SK-N-SH (cell line): ENCODE measurements at regions of chr7 and their contacts with region 1.

Region 1: GRCh38 chr7:1412322-1413261 is 46.7 kb downstream of the MICALL2 start:
- DNase-seq: peak; percentile 100
- H3K4me3 ChIP-seq: no peak overlapping the region; a peak in 2 of 4 replicates
- H3K27ac ChIP-seq: no peak overlapping the region
- H3K4me1 ChIP-seq: peaks cover 0 to 5% of the 10 kb centered on the region in 2 experiments; a peak in 2 of 4 replicates
- H3K27me3 ChIP-seq: peaks cover 76% of the 10 kb centered on the region
- CTCF ChIP-seq: peak; percentile 92
- EP300 ChIP-seq: no peak
- RAD21 ChIP-seq: peak; percentile 80

Region 2: DNA sequence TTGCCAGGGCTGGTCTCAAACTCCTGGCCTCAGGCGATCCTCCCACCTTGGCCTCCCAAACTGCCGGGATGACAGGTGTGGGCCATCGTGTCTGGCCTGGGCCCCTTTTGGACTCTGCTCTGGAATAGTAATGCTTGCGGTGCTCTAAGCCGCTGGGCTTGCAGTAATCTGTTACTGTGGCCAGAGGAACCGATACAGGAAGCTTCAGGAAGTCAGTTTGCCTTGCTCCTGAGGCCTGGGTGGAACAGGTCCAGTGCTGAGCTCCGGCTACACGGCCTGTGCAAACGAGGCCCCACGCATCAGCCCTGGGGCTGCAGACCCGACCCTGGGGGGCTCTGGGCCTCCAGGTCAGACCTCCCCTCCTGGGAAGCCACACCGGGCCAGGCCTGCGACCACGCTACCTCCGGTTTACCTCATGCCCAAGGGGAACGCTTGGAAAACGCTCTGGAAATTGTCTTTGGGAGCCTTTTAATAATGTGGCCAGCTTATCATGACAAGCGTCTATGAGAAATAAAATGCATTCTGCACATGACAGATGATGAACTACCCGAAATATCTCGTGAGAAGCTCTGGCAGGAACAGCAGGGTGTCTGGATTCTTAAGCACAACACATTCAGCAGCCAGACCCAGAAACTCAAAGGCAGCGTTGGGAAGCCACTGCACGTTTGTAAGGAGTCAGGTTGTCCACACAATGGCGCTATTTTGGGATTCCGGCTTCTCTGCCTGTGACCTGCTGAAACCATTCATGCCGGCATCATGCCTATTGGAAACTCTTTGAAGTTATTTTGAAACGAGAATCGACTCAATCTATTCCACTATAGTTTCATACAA is 448.0 kb before region 1 on chr7:
- CTCF ChIA-PET with region 1: no interaction called
- POLR2A ChIA-PET with region 1: no interaction called
- DNase-seq: peak; percentile 89
- H3K4me3 ChIP-seq: no peak overlapping the region
- H3K27ac ChIP-seq: peak overlapping the region in 1 of 2 experiments; percentile 39; a peak in 2 of 4 replicates
- H3K4me1 ChIP-seq: peaks cover 4 to 24% of the 10 kb centered on the region in 2 experiments; a peak in 2 of 4 replicates
- H3K27me3 ChIP-seq: no peaks in the 10 kb centered on the region
- CTCF ChIP-seq: peak; percentile 50
- EP300 ChIP-seq: peak in 1 of 2 experiments; percentile 80; a peak in 2 of 4 replicates
- RAD21 ChIP-seq: peak; percentile 60

Region 3: DNA sequence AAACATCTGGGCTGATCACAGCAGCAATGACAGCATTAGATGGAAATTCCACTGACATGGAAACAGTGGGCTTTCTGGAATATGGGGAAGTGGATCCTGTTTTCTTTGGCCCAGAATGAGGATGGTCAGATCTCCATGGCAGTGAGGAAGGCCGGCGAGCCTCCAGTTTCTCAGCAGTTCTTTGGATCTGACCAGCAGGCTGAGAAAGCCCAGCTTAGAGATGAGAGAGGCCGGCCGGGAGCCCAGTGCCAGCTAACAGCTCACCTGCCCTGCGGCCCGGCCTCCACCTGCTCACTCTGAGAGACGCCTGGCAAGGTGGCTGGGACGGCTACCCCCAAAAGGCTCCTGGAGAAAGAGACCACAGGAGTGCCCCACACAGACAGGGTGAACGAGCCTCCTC is 300.5 kb before region 1 on chr7:
- CTCF ChIA-PET with region 1: no interaction called
- POLR2A ChIA-PET with region 1: no interaction called
- DNase-seq: no peak
- H3K4me3 ChIP-seq: no peak overlapping the region
- H3K27ac ChIP-seq: no peak overlapping the region; a peak in 1 of 4 replicates
- H3K4me1 ChIP-seq: no peaks in the 10 kb centered on the region
- H3K27me3 ChIP-seq: no peaks in the 10 kb centered on the region
- CTCF ChIP-seq: no peak
- EP300 ChIP-seq: no peak
- RAD21 ChIP-seq: no peak

Region 4: GRCh38 chr7:1210321-1210978 is 202.1 kb before region 1 on chr7:
- CTCF ChIA-PET with region 1: interaction called, 12 read pairs
- POLR2A ChIA-PET with region 1: no interaction called
- DNase-seq: peak; percentile 64
- H3K4me3 ChIP-seq: no peak overlapping the region
- H3K27ac ChIP-seq: no peak overlapping the region
- H3K4me1 ChIP-seq: peaks cover 4 to 11% of the 10 kb centered on the region in 2 experiments; a peak in 1 of 4 replicates
- H3K27me3 ChIP-seq: peaks cover 99% of the 10 kb centered on the region
- CTCF ChIP-seq: no peak
- EP300 ChIP-seq: no peak
- RAD21 ChIP-seq: no peak

Region 5: DNA sequence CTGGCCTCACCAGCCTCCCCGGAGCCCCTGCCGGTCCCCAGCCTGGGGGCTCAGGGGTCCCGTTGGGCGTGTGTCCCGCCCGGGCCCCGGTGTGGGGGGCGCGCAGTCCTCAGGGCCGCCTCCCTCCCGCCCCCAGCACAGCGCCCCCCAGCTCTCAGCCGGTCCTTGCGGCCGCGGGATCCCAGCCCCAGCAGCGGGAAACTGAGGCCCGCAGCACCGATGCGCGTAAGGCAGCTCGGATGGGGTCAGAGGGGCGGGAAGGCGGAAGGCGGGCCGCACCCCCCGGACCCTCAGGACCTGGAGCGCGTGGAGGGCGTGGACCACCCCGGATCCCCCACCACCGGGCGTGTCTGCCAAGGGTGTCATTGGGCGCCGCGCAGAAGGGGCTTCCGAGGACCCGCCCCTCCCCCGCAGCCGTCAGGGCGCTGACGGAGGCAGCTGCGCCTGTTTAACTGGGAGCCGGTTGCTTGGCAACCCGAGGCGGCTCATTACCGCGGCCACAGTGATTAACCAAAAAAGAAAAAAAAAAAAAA is 165.0 kb before region 1 on chr7:
- CTCF ChIA-PET with region 1: interaction called, 13 read pairs
- POLR2A ChIA-PET with region 1: no interaction called
- DNase-seq: peak; percentile 76
- H3K4me3 ChIP-seq: no peak overlapping the region
- H3K27ac ChIP-seq: no peak overlapping the region
- H3K4me1 ChIP-seq: no peaks in the 10 kb centered on the region
- H3K27me3 ChIP-seq: peaks cover 95% of the 10 kb centered on the region
- CTCF ChIP-seq: no peak
- EP300 ChIP-seq: no peak
- RAD21 ChIP-seq: no peak

Region 6: DNA sequence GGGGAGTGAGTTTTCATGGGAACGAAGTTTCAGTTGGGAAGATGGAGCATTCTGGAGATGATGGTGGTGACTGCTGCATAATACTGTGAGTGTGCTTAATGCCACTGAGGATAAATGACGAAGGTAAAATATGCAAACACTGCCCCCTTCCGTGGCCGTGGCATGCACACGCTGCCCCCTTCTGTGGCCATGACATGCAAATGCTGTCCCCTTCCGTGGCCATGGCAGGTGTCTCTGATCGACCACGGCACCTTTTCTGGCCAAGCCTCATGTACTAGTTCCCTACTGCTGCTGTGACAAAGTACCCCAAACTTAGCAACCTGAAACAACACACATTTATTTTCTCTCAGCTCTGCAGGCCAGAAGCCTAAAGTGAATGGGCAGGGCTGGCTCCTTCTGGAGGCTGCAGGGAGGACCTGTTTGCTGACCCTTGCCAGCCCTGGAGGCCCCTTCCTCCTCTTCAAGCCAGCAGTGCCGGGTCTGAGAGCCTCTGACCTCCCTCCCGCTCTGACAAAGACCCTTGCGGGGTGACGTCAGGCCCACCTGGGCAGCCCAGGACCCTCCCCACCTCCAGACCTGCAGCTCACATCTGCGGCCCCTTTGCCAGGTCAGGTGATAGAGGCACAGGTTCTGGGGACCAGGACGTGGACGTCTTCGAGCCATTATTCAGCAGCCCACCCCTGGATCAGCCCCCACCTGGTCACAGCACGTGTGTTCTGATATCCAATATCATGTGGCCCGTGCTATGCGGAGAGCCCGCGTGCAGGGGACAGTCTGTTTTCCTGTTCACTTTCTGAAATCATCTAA is 35.3 kb before region 1 on chr7:
- CTCF ChIA-PET with region 1: interaction called, 10 read pairs
- POLR2A ChIA-PET with region 1: no interaction called
- DNase-seq: peak; percentile 42
- H3K4me3 ChIP-seq: no peak overlapping the region
- H3K27ac ChIP-seq: no peak overlapping the region
- H3K4me1 ChIP-seq: no peaks in the 10 kb centered on the region
- H3K27me3 ChIP-seq: peaks cover 86% of the 10 kb centered on the region
- CTCF ChIP-seq: peak; percentile 28; the same call in 1 of the 2 replicates
- EP300 ChIP-seq: no peak
- RAD21 ChIP-seq: peak; percentile 49

Region 7: DNA sequence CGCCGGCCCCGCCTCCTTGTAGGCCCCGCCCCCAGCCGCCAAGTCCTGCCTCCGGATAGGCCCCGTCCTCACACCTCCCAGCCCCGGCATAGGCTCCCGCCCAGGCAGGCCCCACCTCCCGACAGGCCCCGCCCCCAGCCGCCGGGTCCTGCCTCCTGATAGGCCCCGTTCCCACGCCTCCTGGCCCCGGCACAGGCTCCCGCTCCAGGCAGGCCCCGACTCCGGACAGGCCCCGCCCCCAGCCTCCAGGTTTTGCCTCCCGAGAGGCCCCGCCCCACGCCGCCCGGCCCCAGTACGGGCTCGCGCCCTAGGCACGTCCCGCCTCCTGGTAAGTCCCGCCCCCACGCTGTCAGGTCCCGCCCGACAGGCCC is 46.9 kb after region 1 on chr7:
- CTCF ChIA-PET with region 1: interaction called, 11 read pairs
- POLR2A ChIA-PET with region 1: no interaction called
- DNase-seq: peak; percentile 100
- H3K4me3 ChIP-seq: peak overlapping the region; percentile 78 to 100
- H3K27ac ChIP-seq: peak overlapping the region in 1 of 2 experiments; percentile 96; a peak in 1 of 4 replicates
- H3K4me1 ChIP-seq: peaks cover 17 to 33% of the 10 kb centered on the region in 2 experiments; a peak in 3 of 4 replicates
- H3K27me3 ChIP-seq: no peaks in the 10 kb centered on the region
- CTCF ChIP-seq: no peak
- EP300 ChIP-seq: no peak
- RAD21 ChIP-seq: no peak